IMR-90 (cell line): ENCODE measurements at regions of chr17 and their contacts with region 1.

Region 1: DNA sequence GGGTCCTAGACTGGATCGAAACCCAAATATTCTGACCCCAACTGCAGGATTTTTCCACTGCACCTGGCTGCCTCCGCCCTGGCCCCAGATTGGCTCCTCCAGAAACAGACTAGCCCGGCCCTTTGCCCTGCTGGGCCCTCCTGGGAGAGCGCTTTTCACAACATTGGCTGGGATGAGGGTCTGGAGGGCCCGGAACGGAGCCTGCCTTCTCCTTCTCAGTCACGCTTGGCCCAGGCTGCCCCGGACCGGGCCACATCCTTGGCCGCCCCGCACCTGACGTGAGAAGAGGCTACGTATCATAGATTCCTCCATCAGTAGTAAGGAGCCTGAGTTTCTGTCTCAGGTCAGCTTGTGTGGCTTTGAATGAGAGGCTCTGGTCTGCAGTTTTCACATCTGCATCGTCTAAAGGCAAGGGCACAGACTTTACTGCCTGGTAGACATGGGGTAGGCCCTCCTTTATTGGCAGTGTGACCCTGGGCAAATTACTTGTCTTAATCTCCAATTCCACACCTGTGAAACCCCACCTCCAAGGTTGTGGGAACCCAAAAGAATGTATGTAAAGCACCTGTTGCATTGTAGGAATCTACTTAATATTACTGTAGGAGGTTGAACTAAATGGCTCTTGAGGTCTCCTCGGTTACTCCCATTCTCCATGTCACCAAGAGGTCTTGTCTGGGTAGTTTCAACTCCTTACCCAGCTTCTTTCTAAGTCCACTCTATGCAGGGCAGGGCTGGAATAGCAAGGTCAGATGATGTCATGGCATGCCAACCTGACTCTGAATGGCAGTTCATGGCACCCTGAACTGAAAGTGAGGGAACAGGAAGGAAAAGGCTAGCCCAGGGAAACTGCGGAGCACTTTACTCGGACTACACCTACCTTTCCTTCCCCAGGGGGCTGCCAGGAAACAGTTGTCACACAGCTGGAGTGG is 661 bp downstream of the LRRC3C start:
- DNase-seq: no peak
- ATAC-seq: no peak
- H3K4me3 ChIP-seq: peak overlapping the region; percentile 43
- H3K27ac ChIP-seq: peak overlapping the region; percentile 25
- H3K4me1 ChIP-seq: peaks cover 41% of the 10 kb centered on the region
- H3K27me3 ChIP-seq: no peaks in the 10 kb centered on the region
- CTCF ChIP-seq: no peak
- POLR2A ChIP-seq: no peak
- RAD21 ChIP-seq: no peak

Region 2: DNA sequence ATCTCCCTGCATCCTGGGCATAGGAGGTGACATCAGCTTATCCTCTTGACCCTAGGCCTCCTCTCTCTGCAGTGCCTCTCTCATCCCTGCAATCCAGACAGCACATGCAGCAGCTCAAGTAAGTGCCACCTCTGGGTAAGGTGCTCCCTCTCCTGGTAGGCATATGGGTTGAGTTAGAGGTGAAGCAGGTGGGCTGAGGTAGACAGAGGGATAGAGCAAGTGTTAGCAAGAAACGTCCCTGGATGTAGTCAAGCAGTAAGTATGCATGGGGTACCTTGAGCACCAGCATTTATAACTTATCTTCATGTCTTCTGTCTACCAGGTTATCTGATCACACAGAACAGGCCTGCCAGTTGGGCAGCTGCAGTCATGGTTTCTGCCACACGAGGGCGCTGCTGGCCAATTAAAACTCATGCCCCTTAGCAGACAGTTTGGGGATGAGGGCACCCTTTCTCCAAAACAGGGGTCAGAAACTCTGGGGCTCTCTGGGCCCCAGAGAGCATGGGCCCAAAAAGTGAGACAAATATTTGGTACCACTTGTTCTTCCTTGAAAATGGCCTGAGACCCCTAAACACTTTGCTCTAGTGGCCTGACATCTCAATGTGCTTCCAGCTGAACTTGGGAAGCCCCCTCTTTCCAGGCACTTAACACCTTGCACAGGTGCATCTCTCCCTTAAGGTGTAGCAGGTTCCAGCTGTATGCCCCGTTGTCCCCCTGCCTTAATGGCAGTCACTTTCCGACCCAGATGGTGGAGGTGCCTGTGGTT is 380.3 kb before region 1 on chr17:
- CTCF ChIA-PET with region 1: no interaction called
- POLR2A ChIA-PET with region 1: no interaction called
- dilution Hi-C with region 1: no loop called
- in situ Hi-C with region 1: no loop called
- intact Hi-C with region 1: no loop called
- DNase-seq: no peak
- ATAC-seq: peak; percentile 86
- H3K4me3 ChIP-seq: no peak overlapping the region
- H3K27ac ChIP-seq: no peak overlapping the region
- H3K4me1 ChIP-seq: no peaks in the 10 kb centered on the region
- H3K27me3 ChIP-seq: no peaks in the 10 kb centered on the region
- CTCF ChIP-seq: peak; percentile 84
- POLR2A ChIP-seq: no peak
- RAD21 ChIP-seq: peak; percentile 77

Region 3: GRCh38 chr17:39952680-39953470 is 24.7 kb after region 1 on chr17:
- CTCF ChIA-PET with region 1: no interaction called
- POLR2A ChIA-PET with region 1: no interaction called
- dilution Hi-C with region 1: no loop called
- in situ Hi-C with region 1: no loop called
- intact Hi-C with region 1: loop called (anchors 2 kb)
- DNase-seq: peak; percentile 92
- ATAC-seq: peak; percentile 93
- H3K4me3 ChIP-seq: peak overlapping the region; percentile 64
- H3K27ac ChIP-seq: peak overlapping the region; percentile 26; the same call in 1 of the 2 replicates
- H3K4me1 ChIP-seq: peaks cover 7% of the 10 kb centered on the region
- H3K27me3 ChIP-seq: no peaks in the 10 kb centered on the region; the same call in 1 of the 2 replicates
- CTCF ChIP-seq: no peak
- POLR2A ChIP-seq: no peak
- RAD21 ChIP-seq: no peak

Region 4: DNA sequence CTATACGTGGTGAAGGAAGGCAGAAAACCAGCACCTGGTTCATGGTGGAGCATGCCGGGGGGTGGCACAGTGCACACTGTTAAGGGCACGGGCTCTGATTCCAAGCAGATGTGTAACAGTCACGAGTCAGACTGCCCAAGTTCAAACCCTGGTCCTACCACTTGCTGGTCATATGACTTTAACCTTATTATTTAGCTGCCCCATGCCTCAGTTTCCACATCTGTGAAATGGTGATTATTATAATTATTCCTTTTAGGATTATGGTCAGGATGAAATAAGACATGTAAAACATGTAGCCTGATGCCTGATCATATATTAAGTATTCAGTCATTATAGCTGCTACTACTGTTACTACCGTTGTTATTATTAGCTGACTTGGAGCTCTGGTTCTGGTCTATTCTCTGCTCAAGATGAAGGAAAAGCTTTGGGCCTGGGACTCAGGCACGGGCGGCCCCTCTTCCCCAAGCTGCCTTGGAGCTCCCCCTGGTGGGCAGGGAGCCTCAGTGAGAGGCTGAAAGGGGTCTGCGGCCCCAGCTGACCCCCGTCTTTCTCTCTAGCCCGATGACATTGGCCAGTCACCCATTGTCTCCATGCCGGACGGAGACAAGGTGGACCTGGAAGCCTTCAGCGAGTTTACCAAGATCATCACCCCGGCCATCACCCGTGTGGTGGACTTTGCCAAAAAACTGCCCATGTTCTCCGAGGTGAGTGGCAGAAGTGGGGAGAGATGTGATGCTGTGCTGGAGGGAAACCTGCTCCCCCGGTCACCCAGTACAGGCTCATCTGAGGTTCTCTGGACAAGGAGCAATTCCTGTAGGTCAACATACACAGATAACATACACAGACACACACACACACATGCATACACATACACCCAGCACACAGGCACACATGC is 158.2 kb after region 1 on chr17:
- CTCF ChIA-PET with region 1: no interaction called
- POLR2A ChIA-PET with region 1: no interaction called
- dilution Hi-C with region 1: no loop called
- in situ Hi-C with region 1: no loop called
- intact Hi-C with region 1: no loop called
- DNase-seq: no peak
- ATAC-seq: peak; percentile 83
- H3K4me3 ChIP-seq: no peak overlapping the region
- H3K27ac ChIP-seq: no peak overlapping the region
- H3K4me1 ChIP-seq: no peaks in the 10 kb centered on the region; the same call in 1 of the 2 replicates
- H3K27me3 ChIP-seq: no peaks in the 10 kb centered on the region
- CTCF ChIP-seq: peak; percentile 68
- POLR2A ChIP-seq: no peak
- RAD21 ChIP-seq: peak; percentile 80